Endothelial cell of umbilical vein (primary cell): ENCODE measurements at regions of chr17 and their contacts with region 1.

Region 1: GRCh38 chr17:79393358-79394202 is 217.3 kb downstream of the RBFOX3 start:
- DNase-seq: peak; percentile 63
- H3K4me3 ChIP-seq: no peak overlapping the region
- H3K27ac ChIP-seq: no peak overlapping the region
- H3K4me1 ChIP-seq: no peaks in the 10 kb centered on the region
- H3K27me3 ChIP-seq: no peaks in the 10 kb centered on the region
- CTCF ChIP-seq: peak; percentile 94 to 99
- POLR2A ChIP-seq: no peak

Region 2: DNA sequence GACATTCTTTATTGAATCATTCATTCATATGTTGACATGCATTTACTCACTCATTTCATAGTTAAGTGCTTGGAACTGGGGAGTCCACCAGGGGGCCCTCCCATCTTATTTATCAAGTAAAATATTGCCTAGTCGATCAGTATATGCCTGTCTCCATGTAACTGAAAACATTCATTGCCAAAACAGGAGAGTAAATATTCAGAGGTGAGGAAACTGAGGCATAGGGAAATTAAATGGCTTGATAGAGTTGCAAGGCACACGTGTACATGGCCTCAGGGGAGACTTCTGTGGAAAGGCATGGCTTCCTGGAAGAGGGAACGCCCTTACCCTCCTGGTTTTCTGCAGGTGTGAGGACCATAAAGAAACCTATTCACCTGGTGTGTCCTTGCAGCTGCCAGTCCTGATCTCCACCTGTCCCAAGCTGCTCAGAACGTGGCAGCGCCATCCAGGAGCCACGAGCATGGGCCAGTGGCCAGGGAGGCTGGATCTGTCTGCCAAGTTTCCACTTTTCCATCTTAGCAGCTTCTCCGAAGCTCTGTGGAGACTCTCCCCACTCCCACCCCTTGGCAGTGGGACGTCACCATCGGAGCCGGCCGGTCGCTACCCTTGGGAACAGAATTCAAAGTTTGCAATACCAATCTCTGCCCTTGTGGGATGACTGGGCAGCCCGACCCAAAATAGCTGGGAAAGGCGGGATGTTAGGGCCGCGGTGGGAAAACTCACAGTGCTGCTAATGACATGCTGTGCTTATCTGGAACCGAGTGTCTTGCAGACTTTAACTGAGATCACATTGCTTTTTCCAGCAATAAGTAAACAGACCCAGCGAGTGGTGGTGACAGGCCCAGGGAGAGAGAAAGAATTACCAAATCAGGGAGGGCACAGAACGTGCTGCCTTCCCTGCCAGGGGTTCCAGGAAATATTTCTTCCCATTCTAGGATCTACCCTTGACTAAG is 373.7 kb before region 1 on chr17:
- CTCF ChIA-PET with region 1: interaction called, 10 read pairs
- POLR2A ChIA-PET with region 1: no interaction called
- dilution Hi-C with region 1: no loop called
- intact Hi-C with region 1: no loop called
- DNase-seq: peak; percentile 67
- H3K4me3 ChIP-seq: no peak overlapping the region
- H3K27ac ChIP-seq: no peak overlapping the region
- H3K4me1 ChIP-seq: peaks cover 7% of the 10 kb centered on the region
- H3K27me3 ChIP-seq: peaks cover 0 to 10% of the 10 kb centered on the region in 2 experiments
- CTCF ChIP-seq: peak; percentile 59 to 63
- POLR2A ChIP-seq: no peak

Region 3: DNA sequence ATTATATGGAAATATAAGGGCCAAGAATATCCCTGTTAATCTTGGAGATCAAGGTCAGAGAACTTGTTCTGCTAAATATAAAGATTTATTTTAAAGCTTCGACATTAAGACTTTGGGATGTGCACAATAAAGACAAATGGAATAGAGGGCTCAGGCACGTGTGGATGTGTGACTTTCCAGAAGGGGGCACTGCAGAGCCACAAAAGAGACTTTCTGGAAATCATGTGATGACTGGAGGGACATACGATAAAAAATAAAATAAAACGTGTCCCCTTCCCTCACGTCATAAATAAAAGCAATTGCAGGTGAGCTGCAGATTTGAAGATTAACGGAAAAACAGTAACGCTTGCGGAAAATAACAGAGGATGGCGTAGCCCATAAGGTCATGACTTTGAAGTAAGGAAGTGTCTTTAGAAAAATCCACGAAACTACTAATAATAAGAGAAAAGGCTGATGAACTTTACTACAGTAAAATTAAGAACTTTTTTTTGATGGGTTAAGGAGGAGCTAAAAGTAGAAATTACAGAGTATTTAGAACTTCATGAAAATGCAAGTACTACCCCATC is 328.4 kb before region 1 on chr17:
- CTCF ChIA-PET with region 1: interaction called, 71 read pairs
- POLR2A ChIA-PET with region 1: no interaction called
- dilution Hi-C with region 1: no loop called
- intact Hi-C with region 1: loop called (anchors 1 kb)
- DNase-seq: peak; percentile 45
- H3K4me3 ChIP-seq: no peak overlapping the region
- H3K27ac ChIP-seq: no peak overlapping the region
- H3K4me1 ChIP-seq: no peaks in the 10 kb centered on the region
- H3K27me3 ChIP-seq: peaks cover 4 to 7% of the 10 kb centered on the region in 2 experiments
- CTCF ChIP-seq: peak; percentile 45 to 52
- POLR2A ChIP-seq: no peak

Region 4: GRCh38 chr17:79087428-79088143 is 306.0 kb before region 1 on chr17:
- CTCF ChIA-PET with region 1: interaction called, 428 read pairs
- POLR2A ChIA-PET with region 1: interaction called, 4 read pairs
- dilution Hi-C with region 1: no loop called
- intact Hi-C with region 1: loop called (anchors 1 kb)
- DNase-seq: peak; percentile 51
- H3K4me3 ChIP-seq: no peak overlapping the region
- H3K27ac ChIP-seq: no peak overlapping the region
- H3K4me1 ChIP-seq: no peaks in the 10 kb centered on the region
- H3K27me3 ChIP-seq: no peaks in the 10 kb centered on the region
- CTCF ChIP-seq: peak; percentile 81 to 88
- POLR2A ChIP-seq: no peak

Region 5: DNA sequence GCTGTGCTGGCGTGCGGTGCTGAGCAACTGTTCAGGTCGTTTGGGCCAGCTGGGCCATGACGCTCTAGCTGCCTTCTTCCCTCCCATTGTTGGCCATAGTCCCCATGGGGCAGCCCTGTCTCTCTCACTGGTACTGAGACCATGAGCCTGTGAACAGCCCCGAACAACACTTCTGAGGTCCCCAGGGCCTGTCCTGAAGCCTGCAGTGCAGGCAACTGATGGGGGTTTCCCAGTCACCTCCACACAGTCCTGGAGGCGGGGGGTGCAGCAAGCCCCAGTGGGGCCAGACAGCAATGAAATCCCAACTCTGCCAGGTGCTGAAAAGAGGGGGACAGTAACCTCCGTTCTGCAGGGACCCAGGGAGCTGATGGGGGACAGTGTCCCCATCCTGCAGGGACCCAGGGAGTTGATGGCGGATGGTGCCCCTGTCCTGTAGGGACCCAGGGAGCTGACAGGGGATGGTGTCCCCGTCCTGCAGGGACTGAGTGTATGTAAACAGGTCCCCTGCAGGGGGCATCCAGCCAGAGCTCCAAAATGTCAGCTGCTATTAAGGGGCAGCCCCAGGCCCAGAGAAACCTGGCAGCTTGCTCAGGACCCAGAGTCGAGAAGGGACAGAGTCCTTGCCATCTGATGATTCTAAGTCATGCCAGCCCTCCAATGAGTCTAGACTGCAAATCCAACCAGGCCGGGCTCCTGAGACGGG is 288.5 kb before region 1 on chr17:
- CTCF ChIA-PET with region 1: interaction called, 14 read pairs
- POLR2A ChIA-PET with region 1: no interaction called
- dilution Hi-C with region 1: no loop called
- intact Hi-C with region 1: no loop called
- DNase-seq: no peak
- H3K4me3 ChIP-seq: no peak overlapping the region
- H3K27ac ChIP-seq: no peak overlapping the region
- H3K4me1 ChIP-seq: no peaks in the 10 kb centered on the region
- H3K27me3 ChIP-seq: no peaks in the 10 kb centered on the region
- CTCF ChIP-seq: no peak
- POLR2A ChIP-seq: no peak

Region 6: GRCh38 chr17:79305768-79306423 is 87.7 kb before region 1 on chr17:
- CTCF ChIA-PET with region 1: no interaction called
- POLR2A ChIA-PET with region 1: no interaction called
- dilution Hi-C with region 1: no loop called
- intact Hi-C with region 1: no loop called
- DNase-seq: peak; percentile 4
- H3K4me3 ChIP-seq: no peak overlapping the region
- H3K27ac ChIP-seq: no peak overlapping the region
- H3K4me1 ChIP-seq: no peaks in the 10 kb centered on the region
- H3K27me3 ChIP-seq: peaks cover 12 to 18% of the 10 kb centered on the region in 2 experiments
- CTCF ChIP-seq: no peak
- POLR2A ChIP-seq: no peak

Region 7: DNA sequence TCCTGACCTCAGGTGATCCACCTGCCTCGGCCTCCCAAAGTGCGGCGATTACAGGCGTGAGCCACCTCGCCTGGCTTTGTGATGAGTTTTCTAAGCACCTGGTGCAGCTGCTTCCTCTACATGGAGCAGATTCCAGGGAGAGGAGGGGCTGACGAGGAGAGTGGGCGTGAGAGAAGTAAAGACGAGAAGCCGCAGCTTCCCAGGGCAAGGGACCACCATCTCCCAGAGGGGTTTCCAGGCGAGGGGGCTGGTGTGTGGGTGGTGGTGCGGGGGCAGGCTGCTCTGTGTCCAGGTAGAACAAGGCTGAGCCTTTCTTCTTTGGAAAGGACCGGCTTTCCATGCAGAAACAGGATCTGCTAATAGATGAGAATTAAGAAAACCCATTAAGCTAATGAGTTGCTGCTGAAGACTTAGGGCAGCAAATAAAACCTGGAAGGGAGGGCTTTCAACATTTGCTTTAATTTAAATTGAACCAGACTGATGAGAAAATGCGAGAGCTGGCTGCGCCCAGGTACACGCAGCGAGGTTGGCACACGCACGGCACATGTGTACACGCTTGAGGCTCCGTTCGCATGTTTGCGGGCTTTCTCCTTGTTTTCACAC is 19.4 kb before region 1 on chr17:
- CTCF ChIA-PET with region 1: interaction called, 11 read pairs
- POLR2A ChIA-PET with region 1: no interaction called
- dilution Hi-C with region 1: no loop called
- intact Hi-C with region 1: no loop called
- DNase-seq: no peak
- H3K4me3 ChIP-seq: no peak overlapping the region
- H3K27ac ChIP-seq: no peak overlapping the region
- H3K4me1 ChIP-seq: no peaks in the 10 kb centered on the region
- H3K27me3 ChIP-seq: no peaks in the 10 kb centered on the region
- CTCF ChIP-seq: no peak
- POLR2A ChIP-seq: no peak

Region 8: GRCh38 chr17:79473111-79473875 is 79.7 kb after region 1 on chr17:
- CTCF ChIA-PET with region 1: no interaction called
- POLR2A ChIA-PET with region 1: no interaction called
- dilution Hi-C with region 1: no loop called
- intact Hi-C with region 1: no loop called
- DNase-seq: no peak
- H3K4me3 ChIP-seq: no peak overlapping the region
- H3K27ac ChIP-seq: no peak overlapping the region
- H3K4me1 ChIP-seq: no peaks in the 10 kb centered on the region
- H3K27me3 ChIP-seq: no peaks in the 10 kb centered on the region
- CTCF ChIP-seq: no peak
- POLR2A ChIP-seq: no peak

Region 9: DNA sequence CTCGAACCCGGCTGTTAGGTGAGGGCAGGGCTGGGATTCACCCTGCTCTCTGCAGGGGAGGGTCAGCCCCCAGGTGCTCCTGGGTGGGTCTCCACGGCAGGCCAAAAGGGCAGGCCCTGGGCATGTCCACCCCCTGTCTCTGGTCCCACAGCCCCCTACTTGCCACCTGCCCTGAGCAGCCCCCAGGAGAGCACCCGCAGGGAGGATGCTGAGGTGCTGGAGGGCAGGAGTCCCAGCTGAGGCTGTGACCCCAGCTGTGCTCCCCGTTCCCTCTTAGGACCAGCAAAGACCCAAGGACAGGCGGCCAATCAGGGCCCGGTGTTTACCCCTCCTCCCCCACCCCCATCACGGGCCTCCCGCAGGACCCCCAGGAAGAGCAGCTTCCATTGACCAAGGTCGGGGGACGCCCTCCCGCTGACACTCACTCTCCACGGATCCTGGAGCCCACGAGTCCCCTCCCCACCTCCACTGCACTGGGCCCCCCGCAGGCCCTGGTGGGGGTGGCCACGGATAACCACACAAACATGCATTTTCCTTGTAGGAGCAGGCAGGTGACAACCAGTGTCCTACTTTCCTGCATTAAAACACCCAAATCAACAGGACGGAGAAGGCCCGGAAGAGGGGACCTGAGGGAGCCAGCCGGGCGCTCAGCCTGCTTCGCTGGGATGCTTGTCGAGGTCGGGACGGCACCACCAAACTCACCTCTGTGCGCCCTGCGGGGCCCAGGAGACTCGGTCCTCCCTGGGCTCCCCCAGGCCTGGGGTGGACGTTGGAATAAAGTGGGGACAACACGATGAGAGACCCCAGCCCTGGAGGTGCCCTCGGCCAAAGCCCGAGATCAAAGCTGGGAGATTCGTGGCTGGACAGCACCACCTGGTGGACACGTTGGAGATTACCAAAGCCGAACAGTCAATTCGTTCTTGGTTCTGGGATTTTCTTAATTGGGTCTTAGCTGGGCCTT is 314.6 kb after region 1 on chr17:
- CTCF ChIA-PET with region 1: interaction called, 10 read pairs
- POLR2A ChIA-PET with region 1: no interaction called
- dilution Hi-C with region 1: no loop called
- intact Hi-C with region 1: loop called (anchors 2 kb)
- DNase-seq: peak; percentile 35
- H3K4me3 ChIP-seq: no peak overlapping the region
- H3K27ac ChIP-seq: no peak overlapping the region
- H3K4me1 ChIP-seq: no peaks in the 10 kb centered on the region
- H3K27me3 ChIP-seq: no peaks in the 10 kb centered on the region
- CTCF ChIP-seq: peak; percentile 57 to 75
- POLR2A ChIP-seq: no peak